ENCODE measurements at regions of chr10 and their contacts with region 1.

Region 1: DNA sequence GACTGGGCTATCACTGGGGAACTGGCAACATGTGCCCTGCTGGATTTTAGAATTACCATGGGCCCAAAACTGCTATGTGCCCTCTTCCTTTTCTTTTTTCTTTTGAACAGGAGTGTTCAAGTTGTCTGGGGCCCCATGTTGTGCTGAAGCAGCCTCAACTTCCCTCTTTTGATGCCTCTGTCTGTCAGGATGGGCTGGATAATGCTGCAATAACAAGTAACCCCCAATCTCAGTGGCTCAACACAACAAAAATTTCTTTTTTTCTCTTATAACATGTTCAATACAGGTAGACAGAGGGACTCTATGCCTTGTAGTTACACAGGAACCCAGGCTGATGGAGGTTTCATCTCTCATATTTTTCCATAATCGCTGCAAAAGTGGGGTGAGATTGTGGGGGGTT is 8.2 kb upstream of the PCBD1 start:
- DNase-seq: no peak
- H3K4me3 ChIP-seq: no peak overlapping the region
- H3K27ac ChIP-seq: no peak overlapping the region
- H3K4me1 ChIP-seq: 0 out of 2 replicates have a peak, but pooled peaks cover 5% of the 10 kb centered on the region
- H3K27me3 ChIP-seq: no peaks in the 10 kb centered on the region
- CTCF ChIP-seq: no peak

Region 2: DNA sequence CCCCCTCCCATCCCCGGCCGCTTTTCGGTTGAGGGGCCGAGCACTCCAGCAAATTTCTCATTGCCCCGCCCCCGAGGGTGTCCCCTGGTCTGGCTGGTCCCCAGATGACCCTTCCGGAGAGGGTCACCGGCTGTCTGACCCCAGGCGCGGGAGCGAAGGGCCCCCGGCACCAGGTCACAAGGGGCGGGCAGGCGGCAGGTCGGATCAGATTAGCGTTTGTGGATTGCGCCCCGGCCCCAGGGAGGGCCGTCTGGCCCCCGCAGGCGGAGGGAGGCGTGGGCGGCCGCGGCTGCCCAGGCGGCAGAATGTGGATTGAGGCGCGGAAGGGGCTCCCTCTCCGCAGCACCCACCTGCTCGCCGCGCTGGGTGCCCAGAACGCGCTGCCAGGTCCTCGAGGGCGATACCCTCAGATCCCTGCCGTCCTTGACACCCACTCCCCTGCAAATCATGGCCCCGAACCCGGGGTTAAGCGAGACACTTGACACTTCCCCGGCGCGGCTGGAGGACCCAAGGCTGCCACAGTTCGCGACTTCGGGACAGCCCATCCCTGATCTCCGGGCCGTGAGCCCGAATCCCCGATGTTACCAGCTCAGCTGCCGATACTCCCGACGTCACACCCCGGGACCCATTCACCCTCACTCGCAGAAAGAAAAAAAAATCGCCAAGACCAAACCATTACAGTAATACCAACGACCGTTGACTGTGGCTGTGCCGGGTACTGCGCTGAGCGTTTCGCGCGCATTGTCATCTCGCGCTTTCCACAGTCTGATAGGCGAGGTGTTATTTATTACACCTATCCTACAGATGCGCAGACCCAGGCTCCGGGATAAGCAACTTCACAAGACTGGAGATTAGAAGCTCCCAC is 456.0 kb before region 1 on chr10:
- CTCF ChIA-PET with region 1: no interaction called
- POLR2A ChIA-PET with region 1: no interaction called
- intact Hi-C with region 1: no loop called
- DNase-seq: no peak
- H3K4me3 ChIP-seq: no peak overlapping the region
- H3K27ac ChIP-seq: no peak overlapping the region
- H3K4me1 ChIP-seq: no peaks in the 10 kb centered on the region
- H3K27me3 ChIP-seq: peaks cover 16% of the 10 kb centered on the region
- CTCF ChIP-seq: no peak

Region 3: DNA sequence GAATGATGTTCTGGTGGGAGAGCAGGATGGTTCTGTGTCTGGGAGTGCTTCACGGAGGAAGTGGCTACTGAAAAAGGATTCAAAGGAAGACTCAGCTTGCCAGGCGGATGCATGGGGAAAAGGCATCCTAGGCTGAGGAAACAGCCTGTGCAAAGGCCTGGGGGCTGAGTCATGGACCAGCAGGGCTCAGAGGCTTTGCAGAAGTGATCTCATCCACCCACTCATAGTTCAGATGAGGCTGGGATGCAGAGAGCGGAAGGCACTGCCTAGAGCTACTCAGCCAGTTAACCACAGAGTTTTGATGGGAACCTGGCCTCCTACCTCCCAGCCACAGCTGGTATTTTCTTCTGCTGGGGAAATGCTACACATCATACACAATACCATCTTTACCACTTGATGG is 240.1 kb before region 1 on chr10:
- CTCF ChIA-PET with region 1: interaction called, 14 read pairs
- POLR2A ChIA-PET with region 1: no interaction called
- intact Hi-C with region 1: no loop called
- DNase-seq: peak; percentile 28 to 78
- H3K4me3 ChIP-seq: no peak overlapping the region
- H3K27ac ChIP-seq: peak overlapping the region; percentile 47
- H3K4me1 ChIP-seq: peaks cover 15% of the 10 kb centered on the region
- H3K27me3 ChIP-seq: no peaks in the 10 kb centered on the region
- CTCF ChIP-seq: no peak